Naive thymus-derived CD4-positive, alpha-beta T cell (primary cell): ENCODE measurements at regions of chr14 and their contacts with region 1.

Region 1: DNA sequence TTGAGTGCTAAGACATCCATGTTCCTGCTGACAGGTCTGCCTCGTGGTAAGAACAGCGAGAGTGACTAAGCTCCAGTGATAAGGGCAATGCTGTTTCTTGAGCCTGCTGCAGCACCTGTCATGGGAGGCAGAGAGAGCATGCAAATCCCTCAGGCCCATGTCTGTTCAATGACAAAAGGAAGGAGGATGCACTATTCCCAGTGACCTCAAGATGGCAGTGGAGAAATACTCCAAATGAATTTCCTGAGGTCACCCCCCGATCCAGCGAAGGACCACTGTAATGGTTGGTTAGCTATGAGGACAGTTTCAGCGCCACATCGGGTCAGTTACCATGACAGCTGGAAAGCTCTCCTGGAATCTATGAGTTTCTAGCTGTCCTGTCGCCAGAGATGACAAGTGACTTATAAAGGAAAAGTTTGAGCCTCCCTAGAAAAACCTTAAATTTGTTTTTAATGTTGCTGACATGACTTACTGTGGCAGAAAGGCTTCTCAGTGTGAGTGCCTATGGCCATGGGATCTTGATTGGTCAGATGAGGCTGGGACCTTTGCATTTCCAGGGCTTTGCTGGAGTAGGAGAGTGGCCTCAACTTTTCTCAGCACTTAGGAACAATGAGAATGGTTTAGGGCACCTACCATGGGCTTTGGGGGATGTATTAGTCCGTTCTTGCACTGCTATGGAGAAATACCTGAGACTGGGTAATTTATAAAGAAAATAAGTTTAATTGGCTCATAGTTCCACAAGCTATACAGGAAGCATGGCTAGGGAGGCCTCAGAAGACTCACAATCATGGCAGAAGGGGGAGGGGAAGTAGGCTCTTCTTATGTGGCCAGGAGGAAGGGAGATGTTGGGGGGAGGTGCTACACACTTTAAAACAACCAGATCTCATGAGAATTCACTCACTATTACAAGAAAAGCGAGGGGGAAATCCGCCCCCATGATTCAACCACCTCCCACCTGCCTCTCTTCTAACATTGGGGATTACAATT is 88.0 kb upstream of the TMEM260 start:
- DNase-seq: peak in 5 of 9 donors; percentile 10 to 36 (median 21)
- ATAC-seq: no peak
- H3K4me3 ChIP-seq: peak overlapping the region; percentile 22
- H3K4me3 Mint-ChIP-seq: peak overlapping the region in 6 of 10 donors; percentile 40 to 59 (median 48)
- H3K27ac ChIP-seq: no peak overlapping the region
- H3K27ac Mint-ChIP-seq: no peak overlapping the region
- H3K4me1 ChIP-seq: no peaks in the 10 kb centered on the region
- H3K4me1 Mint-ChIP-seq: peaks cover 0 to 13% (median 10%) of the 10 kb centered on the region in 7 donors
- H3K27me3 ChIP-seq: no peaks in the 10 kb centered on the region
- H3K27me3 Mint-ChIP-seq: peaks cover 0 to 6% (median 0%) of the 10 kb centered on the region in 5 donors

Region 2: DNA sequence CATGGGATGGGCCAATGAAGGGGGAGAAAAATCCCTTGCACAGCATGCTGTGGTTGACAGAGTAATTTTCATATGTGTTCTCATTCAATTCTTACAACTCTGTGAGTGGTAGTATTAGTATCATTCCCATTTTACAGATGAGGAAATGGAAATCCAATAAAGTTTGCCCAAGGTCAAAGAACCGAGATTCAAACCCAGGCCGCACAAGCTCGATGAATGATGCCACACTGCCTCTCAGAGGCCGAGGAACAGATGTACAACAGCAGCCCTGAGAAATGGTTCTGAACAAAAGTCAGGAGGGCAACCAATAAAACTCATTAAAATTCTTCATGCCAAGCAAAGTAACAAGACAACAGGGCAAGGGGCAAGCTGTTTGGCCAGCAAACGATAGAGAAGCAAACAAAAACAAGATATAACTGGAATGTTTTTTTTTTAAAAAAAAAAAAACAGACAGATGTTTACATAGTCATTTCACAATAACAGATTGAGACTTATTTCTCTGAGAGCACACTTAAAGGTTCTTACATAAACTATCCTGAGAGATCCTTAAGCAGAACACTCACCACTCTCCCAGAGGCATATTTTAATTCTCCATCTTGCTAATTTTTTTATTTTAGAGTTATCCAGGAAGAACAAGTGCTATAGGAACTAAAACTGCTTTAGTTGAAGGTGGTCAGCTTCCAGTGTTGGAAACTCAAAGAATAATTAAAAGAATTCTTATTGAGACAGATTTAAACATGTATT is 691.3 kb after region 1 on chr14:
- CTCF ChIA-PET with region 1: interaction called, 3 read pairs
- POLR2A ChIA-PET with region 1: no interaction called
- intact Hi-C with region 1: loop called (anchors 1 to 10 kb)
- DNase-seq: no peak
- ATAC-seq: no peak
- H3K4me3 ChIP-seq: no peak overlapping the region
- H3K4me3 Mint-ChIP-seq: no peak overlapping the region
- H3K27ac ChIP-seq: no peak overlapping the region
- H3K27ac Mint-ChIP-seq: no peak overlapping the region
- H3K4me1 ChIP-seq: no peaks in the 10 kb centered on the region
- H3K4me1 Mint-ChIP-seq: no peaks in the 10 kb centered on the region
- H3K27me3 ChIP-seq: no peaks in the 10 kb centered on the region
- H3K27me3 Mint-ChIP-seq: peaks cover 5 to 28% (median 16%) of the 10 kb centered on the region in 5 donors

Region 3: DNA sequence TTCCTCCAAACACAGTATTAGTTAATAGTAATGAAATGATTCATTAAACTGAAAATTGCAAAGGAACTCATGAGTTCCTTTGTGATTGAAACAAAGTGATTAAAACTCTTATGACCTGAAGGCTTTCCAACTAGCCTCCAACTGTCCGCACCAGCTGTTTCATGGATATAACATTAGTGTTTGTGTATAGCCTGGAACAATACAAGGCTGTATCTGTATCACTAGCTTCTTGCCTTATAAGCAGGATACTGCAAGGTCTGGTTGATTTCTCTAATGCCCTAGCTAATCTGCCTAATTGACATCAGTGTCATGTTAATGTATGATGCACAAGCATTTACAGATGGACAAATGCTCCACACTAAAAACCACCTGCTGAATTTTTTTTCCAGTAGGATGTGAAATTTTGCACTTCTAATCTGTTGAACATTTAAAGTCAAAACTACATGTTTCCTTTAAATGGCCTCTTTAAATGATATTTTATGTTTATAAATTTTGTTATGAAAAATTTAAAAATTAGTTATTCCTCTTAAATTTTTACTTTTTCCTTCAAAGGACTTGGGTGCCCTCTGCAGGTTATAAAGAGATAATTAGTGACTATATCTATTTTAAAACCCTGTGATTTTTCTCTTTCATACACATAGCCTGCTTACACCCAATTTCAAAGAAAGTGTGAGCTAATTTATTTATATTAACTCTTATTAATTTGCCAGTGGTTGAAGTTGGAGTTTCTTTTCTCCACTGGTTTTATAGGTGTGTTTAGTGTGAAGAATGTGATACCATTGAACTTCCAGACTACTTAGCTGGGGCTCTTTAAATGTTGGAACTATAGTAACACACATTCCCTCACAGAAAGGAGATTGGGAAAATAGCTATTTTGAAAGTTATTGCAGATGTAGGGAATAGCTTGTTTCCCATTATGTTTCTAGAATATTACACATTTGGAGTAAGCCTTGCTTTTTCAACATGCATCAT is 802.6 kb after region 1 on chr14:
- CTCF ChIA-PET with region 1: interaction called, 8 read pairs
- POLR2A ChIA-PET with region 1: no interaction called
- intact Hi-C with region 1: loop called in 1 of 2 experiments (anchors 1 kb)
- DNase-seq: peak in 2 of 9 donors; percentile 2 to 7
- ATAC-seq: no peak
- H3K4me3 ChIP-seq: no peak overlapping the region
- H3K4me3 Mint-ChIP-seq: no peak overlapping the region
- H3K27ac ChIP-seq: no peak overlapping the region
- H3K27ac Mint-ChIP-seq: no peak overlapping the region
- H3K4me1 ChIP-seq: no peaks in the 10 kb centered on the region
- H3K4me1 Mint-ChIP-seq: no peaks in the 10 kb centered on the region
- H3K27me3 ChIP-seq: no peaks in the 10 kb centered on the region
- H3K27me3 Mint-ChIP-seq: no peaks in the 10 kb centered on the region